Activated CD4-positive, alpha-beta memory T cell treated with anti-CD3 and anti-CD28 coated beads, Interleukin-2, amount 10 ng/mL, durations not matched to agents 7 days and 5 days (primary cell): ENCODE measurements at regions of chr14 and their contacts with region 1.

Region 1: DNA sequence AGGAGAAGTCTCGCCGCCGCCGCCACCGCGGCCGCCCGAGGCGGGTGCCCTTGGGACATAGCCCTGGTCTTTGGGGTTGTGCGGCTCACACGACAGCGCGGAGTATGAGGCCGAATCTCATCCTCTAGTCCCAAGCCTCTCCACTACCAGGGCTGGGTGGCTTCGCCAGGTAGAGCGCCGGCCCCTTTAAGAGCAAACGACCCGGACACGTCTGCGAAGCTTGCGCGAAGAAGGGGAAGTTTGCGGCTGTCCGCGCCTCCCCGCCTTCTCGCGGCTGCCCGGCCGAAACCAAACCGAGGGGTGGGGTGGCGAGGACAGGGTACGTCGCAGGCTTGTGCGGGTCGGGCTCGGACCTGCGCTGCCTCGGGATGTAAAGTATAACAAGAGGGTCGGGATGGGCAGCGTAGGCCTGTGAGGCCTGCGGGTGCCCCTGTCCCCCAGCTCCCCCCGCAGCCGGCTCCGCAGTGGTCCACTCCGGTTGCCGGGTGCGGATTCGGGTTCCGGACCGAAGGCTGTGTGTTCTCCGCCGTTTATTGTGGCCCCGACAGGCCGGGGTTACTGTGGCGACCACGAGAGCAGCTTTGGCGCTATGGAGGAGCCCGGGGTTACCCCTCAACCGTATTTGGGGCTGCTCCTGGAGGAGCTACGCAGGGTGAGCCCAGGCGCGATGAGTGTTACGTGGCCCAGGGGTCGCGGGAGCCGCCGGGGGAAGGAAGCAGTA is 33.3 kb downstream of the MIA2 start:
- DNase-seq: peak; percentile 84
- H3K4me3 Mint-ChIP-seq: peak overlapping the region; percentile 73
- H3K27ac Mint-ChIP-seq: peak overlapping the region; percentile 94
- H3K4me1 Mint-ChIP-seq: peaks cover 50% of the 10 kb centered on the region
- H3K27me3 Mint-ChIP-seq: no peaks in the 10 kb centered on the region

Region 2: GRCh38 chr14:39102969-39103957 is 163.8 kb before region 1 on chr14 and contains the start of gene SEC23A:
- CTCF ChIA-PET with region 1: no interaction called
- POLR2A ChIA-PET with region 1: interaction called, 13 read pairs
- DNase-seq: peak; percentile 88
- H3K4me3 Mint-ChIP-seq: peak within 1 kb of the TSS; percentile 97
- H3K27ac Mint-ChIP-seq: peak within 1 kb of the TSS; percentile 91
- H3K4me1 Mint-ChIP-seq: peaks cover 47% of the 10 kb centered on the region
- H3K27me3 Mint-ChIP-seq: no peaks in the 10 kb centered on the region
- total RNA-seq, gene SEC23A: 59.7 to 69.0 TPM

Region 3: DNA sequence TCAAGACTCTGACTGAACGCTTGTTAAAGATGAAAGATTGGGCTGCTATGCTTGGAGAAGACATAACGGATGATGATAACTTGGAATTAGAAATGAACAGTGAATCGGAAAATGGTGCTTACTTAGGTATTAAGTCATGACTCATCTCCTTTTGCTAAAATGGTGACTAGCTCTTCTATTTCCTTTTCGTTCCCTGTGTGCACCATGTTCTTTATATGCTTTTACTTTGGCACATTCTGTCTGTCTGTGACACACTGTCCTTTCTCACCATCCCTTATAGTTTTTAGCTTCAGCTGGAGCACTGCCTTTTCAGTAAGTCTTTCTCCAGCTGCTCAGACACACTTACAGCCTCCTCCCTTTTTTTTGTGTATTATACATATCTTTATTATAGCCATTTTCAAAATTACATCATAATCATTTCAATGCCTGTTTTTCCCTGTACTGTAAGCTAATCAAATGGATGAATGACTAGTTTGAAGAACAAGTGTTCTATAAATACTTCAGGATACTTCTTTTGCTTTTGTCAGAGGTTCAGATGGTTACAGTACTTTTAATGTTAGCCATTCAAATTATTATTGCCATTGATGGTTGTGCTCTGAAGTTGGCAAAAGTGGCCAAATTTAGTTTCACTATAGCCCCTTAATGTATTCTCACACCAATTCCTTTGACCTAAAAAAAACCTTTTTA is 35.2 kb after region 1 on chr14:
- CTCF ChIA-PET with region 1: no interaction called
- POLR2A ChIA-PET with region 1: no interaction called
- DNase-seq: no peak
- H3K4me3 Mint-ChIP-seq: no peak overlapping the region
- H3K27ac Mint-ChIP-seq: no peak overlapping the region
- H3K4me1 Mint-ChIP-seq: peaks cover 4% of the 10 kb centered on the region
- H3K27me3 Mint-ChIP-seq: no peaks in the 10 kb centered on the region

Region 4: GRCh38 chr14:39342768-39343167 is 75.7 kb after region 1 on chr14:
- CTCF ChIA-PET with region 1: no interaction called
- POLR2A ChIA-PET with region 1: interaction called, 10 read pairs
- DNase-seq: no peak
- H3K4me3 Mint-ChIP-seq: no peak overlapping the region
- H3K27ac Mint-ChIP-seq: peak overlapping the region; percentile 16
- H3K4me1 Mint-ChIP-seq: peaks cover 24% of the 10 kb centered on the region
- H3K27me3 Mint-ChIP-seq: no peaks in the 10 kb centered on the region

Region 5: DNA sequence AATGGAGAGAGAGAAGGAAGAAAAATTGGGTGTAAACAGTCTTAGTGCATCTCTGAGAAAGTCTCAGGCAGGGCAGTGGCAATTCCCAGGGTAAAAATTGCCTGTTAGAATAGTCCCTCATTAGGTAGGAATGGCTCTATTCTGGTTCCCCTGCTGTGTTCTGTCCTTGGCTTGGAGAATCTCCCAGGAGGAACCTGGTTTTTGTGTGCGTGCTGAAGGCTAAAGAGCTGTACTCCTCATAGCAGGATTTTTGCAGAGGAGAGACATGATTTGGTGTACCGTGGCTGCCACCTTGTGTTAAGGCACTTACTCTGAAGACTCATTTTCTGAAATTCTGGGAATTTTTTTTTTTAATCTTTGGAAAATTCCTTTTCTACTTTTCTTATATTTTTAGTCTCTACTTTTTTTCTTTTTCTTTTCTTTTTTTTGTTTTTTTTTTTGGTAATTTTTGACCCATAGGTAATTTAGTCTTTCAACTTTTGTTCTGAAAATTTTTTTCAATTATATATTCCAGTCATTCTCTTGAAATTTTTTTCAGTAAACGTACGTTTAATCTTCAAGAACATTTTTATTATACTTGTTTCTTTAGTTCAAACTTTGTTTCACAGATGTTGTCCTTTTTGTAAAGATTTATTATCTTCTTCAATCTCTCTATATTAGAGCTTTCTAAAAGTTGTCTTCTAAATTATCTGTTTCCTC is 101.4 kb after region 1 on chr14:
- CTCF ChIA-PET with region 1: no interaction called
- POLR2A ChIA-PET with region 1: no interaction called
- DNase-seq: peak; percentile 39
- H3K4me3 Mint-ChIP-seq: no peak overlapping the region
- H3K27ac Mint-ChIP-seq: no peak overlapping the region
- H3K4me1 Mint-ChIP-seq: peaks cover 1% of the 10 kb centered on the region
- H3K27me3 Mint-ChIP-seq: no peaks in the 10 kb centered on the region